ENCODE measurements at regions of chr15 and their contacts with region 1.

Region 1: GRCh38 chr15:23634181-23634580 is 13.5 kb downstream of the MAGEL2 start:
- DNase-seq: no peak
- ATAC-seq: no peak
- H3K4me3 ChIP-seq: no peak overlapping the region
- H3K27ac ChIP-seq: no peak overlapping the region
- H3K4me1 ChIP-seq: no peaks in the 10 kb centered on the region
- H3K27me3 ChIP-seq: peaks cover 0 to 19% of the 10 kb centered on the region in 2 donors
- CTCF ChIP-seq: no peak

Region 2: GRCh38 chr15:23690450-23690852 is 56.3 kb after region 1 on chr15:
- intact Hi-C with region 1: loop called in 1 of 2 experiments (anchors 10 kb)
- DNase-seq: peak in 3 of 4 donors; percentile 61 to 93 (median 79)
- ATAC-seq: peak; percentile 85
- H3K4me3 ChIP-seq: no peak overlapping the region
- H3K27ac ChIP-seq: peak overlapping the region in 1 of 2 donors; percentile 10
- H3K4me1 ChIP-seq: peaks cover 0 to 6% of the 10 kb centered on the region in 2 donors
- H3K27me3 ChIP-seq: peaks cover 0 to 12% of the 10 kb centered on the region in 2 donors
- CTCF ChIP-seq: no peak

Region 3: GRCh38 chr15:23762026-23762425 is 127.8 kb after region 1 on chr15:
- intact Hi-C with region 1: no loop called
- DNase-seq: no peak
- ATAC-seq: no peak
- H3K4me3 ChIP-seq: no peak overlapping the region
- H3K27ac ChIP-seq: no peak overlapping the region
- H3K4me1 ChIP-seq: no peaks in the 10 kb centered on the region
- H3K27me3 ChIP-seq: no peaks in the 10 kb centered on the region
- CTCF ChIP-seq: no peak

Region 4: GRCh38 chr15:23854203-23854911 is 220.2 kb after region 1 on chr15:
- intact Hi-C with region 1: no loop called
- DNase-seq: no peak
- ATAC-seq: no peak
- H3K4me3 ChIP-seq: no peak overlapping the region
- H3K27ac ChIP-seq: no peak overlapping the region
- H3K4me1 ChIP-seq: no peaks in the 10 kb centered on the region
- H3K27me3 ChIP-seq: peaks cover 0 to 4% of the 10 kb centered on the region in 2 donors
- CTCF ChIP-seq: no peak

Measured in left lung (tissue), 14 donors.